ENCODE measurements at regions of chr14 and their contacts with region 1.

Region 1: GRCh38 chr14:88792572-88793258 is at the start of gene EML5:
- DNase-seq: peak; percentile 87
- H3K4me3 ChIP-seq: peak within 1 kb of the TSS; percentile 74
- H3K27ac ChIP-seq: peak within 1 kb of the TSS; percentile 32
- H3K4me1 ChIP-seq: peaks cover 14% of the 10 kb centered on the region
- CTCF ChIP-seq: peak; percentile 20
- total RNA-seq, gene EML5: 1.8 and 2.1 TPM in 2 replicates

Region 2: DNA sequence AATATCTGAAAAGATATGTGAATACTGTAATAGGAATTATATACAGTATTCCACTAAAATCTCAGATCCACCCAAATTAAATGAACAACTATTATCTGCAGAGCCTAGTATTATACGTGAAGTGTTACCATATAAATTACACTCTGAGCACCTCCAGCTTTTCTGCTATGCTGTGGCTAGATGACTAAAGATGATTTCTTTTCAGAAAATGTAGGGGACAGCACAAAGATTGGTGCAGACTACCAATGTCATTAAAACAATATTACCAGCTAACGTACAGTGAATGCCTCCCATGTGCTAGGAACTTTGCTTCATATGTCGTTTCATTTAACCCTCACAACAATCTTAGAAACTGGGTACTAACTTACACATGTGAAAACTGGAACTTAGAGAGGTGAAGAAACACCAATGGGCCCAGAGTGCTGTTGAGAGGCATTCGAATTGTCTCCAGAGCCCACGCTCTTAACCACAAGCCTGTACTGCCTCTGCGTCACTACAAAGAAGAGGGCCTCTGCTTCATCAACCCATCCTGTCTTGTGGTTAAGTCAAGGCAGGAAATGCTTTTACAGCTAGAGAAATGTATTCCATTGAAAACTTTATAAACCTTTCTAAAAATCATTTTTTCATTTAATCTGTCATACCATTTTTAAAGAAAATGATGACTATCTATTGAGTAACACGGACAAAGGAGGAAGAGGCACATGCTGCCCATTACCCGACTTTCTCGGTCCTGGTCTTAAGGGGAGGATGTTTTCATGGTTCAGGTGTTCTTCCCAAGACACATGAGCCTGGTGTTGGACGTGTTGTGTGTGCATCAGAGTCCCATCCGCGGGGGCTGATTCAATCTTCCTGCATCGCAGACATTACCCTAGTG is 786.5 kb before region 1 on chr14:
- CTCF ChIA-PET with region 1: no interaction called
- POLR2A ChIA-PET with region 1: no interaction called
- intact Hi-C with region 1: loop called (anchors 10 kb)
- DNase-seq: peak; percentile 84
- H3K4me3 ChIP-seq: peak overlapping the region; percentile 71
- H3K27ac ChIP-seq: peak overlapping the region; percentile 78
- H3K4me1 ChIP-seq: peaks cover 42% of the 10 kb centered on the region
- CTCF ChIP-seq: no peak

Region 3: DNA sequence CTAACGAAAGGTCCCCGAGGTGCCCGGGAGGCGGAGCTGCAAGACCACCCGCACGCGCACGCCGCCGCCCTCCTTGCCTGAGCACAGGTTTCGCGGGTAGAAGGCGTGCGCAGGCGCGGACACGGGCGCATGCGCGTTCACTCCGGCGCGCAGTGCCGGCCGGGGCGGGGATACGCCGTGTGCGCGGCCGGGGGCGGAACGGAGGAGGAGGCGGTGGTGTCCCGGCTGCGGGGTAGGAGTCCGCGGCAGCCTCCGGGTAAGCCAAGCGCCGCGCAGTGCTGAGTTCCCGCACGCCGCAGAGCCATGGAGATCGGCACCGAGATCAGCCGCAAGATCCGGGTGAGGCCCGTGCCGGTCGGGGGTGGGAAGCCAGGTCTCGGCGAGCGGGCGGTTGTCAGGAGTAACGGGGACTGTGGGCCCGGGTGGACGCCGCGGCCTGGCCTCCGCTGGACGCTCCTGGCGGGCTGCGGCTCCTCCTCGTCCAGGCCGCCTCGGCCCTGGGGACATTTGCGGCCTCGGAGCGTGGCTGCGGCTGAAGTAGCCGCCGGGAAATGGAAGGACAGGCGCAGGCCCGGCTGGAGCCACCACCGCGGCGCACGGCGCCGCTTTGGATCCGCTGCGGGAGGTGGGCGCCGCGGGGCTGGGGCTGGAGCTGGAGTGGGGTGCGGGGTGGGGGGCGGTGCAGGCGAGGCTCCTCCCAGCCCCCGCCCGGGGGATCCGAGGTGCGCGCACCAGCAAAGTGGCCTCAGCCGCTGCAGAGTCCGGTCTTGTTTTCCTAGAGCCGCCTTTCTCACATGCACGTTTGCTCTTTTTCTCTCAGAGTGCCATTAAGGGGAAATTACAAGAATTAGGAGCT is 229.7 kb before region 1 on chr14 and contains the start of gene ZC3H14:
- CTCF ChIA-PET with region 1: no interaction called
- POLR2A ChIA-PET with region 1: no interaction called
- intact Hi-C with region 1: loop called (anchors 1 kb)
- DNase-seq: peak; percentile 90
- H3K4me3 ChIP-seq: peak within 1 kb of the TSS; percentile 94
- H3K27ac ChIP-seq: peak within 1 kb of the TSS; percentile 43
- H3K4me1 ChIP-seq: peaks cover 16% of the 10 kb centered on the region
- CTCF ChIP-seq: peak; percentile 39; the same call in 1 of the 2 replicates
- total RNA-seq, gene ZC3H14: 51.9 and 53.5 TPM in 2 replicates

Region 4: DNA sequence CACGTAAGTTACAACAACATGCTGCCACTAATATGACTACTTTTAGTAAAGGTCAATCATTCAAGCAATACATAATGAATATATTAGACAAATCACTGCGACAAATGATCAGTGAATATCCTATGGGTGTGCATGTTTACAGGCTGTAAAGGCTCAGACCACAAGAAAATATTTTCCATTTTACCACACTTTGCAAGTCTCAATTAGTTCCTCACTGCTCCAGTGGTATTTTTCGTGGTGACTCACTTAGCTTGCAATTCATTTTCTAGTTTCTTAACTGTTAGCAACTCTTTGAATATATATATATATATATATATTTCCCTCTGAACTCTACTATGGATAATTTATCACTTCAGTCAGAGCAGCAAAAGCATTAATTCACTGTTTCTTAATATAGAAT is 96.8 kb before region 1 on chr14:
- CTCF ChIA-PET with region 1: no interaction called
- POLR2A ChIA-PET with region 1: no interaction called
- intact Hi-C with region 1: no loop called
- DNase-seq: no peak
- H3K4me3 ChIP-seq: no peak overlapping the region
- H3K27ac ChIP-seq: no peak overlapping the region
- H3K4me1 ChIP-seq: no peaks in the 10 kb centered on the region
- CTCF ChIP-seq: no peak

Region 5: DNA sequence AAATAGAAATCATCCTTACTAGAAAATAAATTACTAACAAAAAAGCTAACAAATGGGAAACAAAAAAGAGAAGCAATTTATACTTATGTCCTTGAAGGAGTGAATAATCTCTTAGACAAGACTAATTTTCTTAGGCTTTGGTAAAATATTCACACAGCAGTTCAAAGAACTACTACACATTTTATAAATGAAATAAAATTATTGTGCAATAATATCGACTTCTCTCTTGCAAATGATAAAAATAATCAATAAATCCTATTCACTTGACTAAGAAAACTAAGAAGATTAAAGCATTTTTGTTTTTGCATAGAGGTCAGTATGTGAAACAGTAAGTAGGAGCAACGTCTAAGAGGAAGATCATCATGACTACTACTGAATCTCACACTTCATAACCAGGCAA is 82.0 kb before region 1 on chr14:
- CTCF ChIA-PET with region 1: no interaction called
- POLR2A ChIA-PET with region 1: no interaction called
- intact Hi-C with region 1: no loop called
- DNase-seq: no peak
- H3K4me3 ChIP-seq: no peak overlapping the region
- H3K27ac ChIP-seq: no peak overlapping the region
- H3K4me1 ChIP-seq: no peaks in the 10 kb centered on the region
- CTCF ChIP-seq: no peak

Region 6: GRCh38 chr14:88824314-88825077 is 31.8 kb after region 1 on chr14 and contains the start of gene TTC8:
- CTCF ChIA-PET with region 1: no interaction called
- POLR2A ChIA-PET with region 1: interaction called, 5 read pairs
- intact Hi-C with region 1: loop called (anchors 2 kb)
- DNase-seq: peak; percentile 90
- H3K4me3 ChIP-seq: peak within 1 kb of the TSS; percentile 75
- H3K27ac ChIP-seq: peak within 1 kb of the TSS; percentile 39
- H3K4me1 ChIP-seq: peaks cover 7% of the 10 kb centered on the region
- CTCF ChIP-seq: no peak
- total RNA-seq, gene TTC8: 2.7 and 3.0 TPM in 2 replicates